OCI-LY7 (cell line): ENCODE measurements at regions of chr13 and their contacts with region 1.

Region 1: GRCh38 chr13:46126552-46127357 is 21.9 kb upstream of the CPB2 start:
- DNase-seq: peak; percentile 77
- H3K4me3 ChIP-seq: no peak overlapping the region
- H3K27ac ChIP-seq: no peak overlapping the region
- H3K4me1 ChIP-seq: peaks cover 15% of the 10 kb centered on the region
- CTCF ChIP-seq: peak; percentile 90

Region 2: DNA sequence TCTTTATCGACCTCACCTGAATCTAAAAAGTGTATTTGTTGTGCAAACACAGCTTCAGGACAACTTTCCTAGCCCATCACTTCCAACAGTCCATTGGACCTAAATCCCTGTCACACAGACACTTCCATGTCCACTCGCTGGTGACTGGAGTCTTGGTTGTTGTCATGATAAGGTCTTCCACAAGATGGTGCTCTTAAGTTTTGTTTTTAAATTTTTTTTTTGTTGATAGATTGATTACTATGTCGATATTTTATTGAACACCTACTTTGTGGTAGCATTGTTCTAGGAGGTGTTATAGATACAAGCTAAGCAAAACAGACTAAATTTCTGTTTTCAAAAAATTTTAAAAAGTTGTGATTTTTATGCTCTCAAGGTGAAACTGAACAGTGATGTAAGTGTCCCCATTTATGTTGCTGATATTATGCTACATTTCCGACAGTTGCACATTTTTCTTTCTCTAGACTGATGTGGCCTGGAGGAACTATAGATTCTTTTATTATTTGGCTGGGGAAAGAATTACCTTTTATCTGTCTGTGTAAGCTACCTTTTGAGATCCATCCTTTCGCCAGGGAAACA is 503.2 kb before region 1 on chr13:
- CTCF ChIA-PET with region 1: no interaction called
- POLR2A ChIA-PET with region 1: no interaction called
- intact Hi-C with region 1: loop called (anchors 10 kb)
- DNase-seq: peak; percentile 14
- H3K4me3 ChIP-seq: no peak overlapping the region
- H3K27ac ChIP-seq: no peak overlapping the region
- H3K4me1 ChIP-seq: no peaks in the 10 kb centered on the region
- CTCF ChIP-seq: peak; percentile 82

Region 3: DNA sequence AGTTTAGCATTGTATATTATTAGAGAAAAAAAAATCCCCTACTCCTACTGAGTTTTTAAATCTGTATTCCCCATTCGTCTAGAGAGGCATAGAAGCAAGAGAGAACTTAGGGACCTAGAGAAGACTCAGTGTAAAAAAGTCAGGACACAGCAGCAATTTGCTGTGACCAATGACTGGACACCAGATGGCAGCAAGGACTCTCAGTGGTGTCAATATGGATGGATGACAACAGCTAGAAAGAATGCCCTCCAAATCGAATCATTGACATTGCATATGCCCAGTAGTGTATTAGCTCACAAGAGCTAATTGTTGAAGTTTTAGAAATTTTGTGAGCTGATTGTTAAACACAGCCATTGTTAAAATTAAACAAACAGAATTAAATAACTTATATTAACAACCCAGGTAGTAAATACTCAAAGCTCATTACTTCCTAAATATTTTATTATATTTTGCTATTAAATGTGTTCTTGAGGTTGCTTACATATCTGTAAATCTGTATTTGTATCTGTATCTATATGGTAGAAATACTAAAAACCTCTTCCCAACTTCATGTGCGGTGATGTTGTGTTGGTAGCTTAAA is 319.1 kb before region 1 on chr13:
- CTCF ChIA-PET with region 1: no interaction called
- POLR2A ChIA-PET with region 1: no interaction called
- intact Hi-C with region 1: loop called (anchors 10 kb)
- DNase-seq: peak; percentile 36
- H3K4me3 ChIP-seq: no peak overlapping the region
- H3K27ac ChIP-seq: no peak overlapping the region
- H3K4me1 ChIP-seq: no peaks in the 10 kb centered on the region
- CTCF ChIP-seq: peak; percentile 69

Region 4: GRCh38 chr13:46267166-46267565 is 140.4 kb after region 1 on chr13:
- CTCF ChIA-PET with region 1: no interaction called
- POLR2A ChIA-PET with region 1: no interaction called
- intact Hi-C with region 1: no loop called
- DNase-seq: no peak
- H3K4me3 ChIP-seq: no peak overlapping the region
- H3K27ac ChIP-seq: no peak overlapping the region
- H3K4me1 ChIP-seq: no peaks in the 10 kb centered on the region
- CTCF ChIP-seq: no peak